ENCODE measurements at regions of chr5 and their contacts with region 1.

Region 1: GRCh38 chr5:80960531-80961375 is 590 bp downstream of the RASGRF2 start:
- DNase-seq: peak; percentile 40 to 74
- H3K4me3 ChIP-seq: peak overlapping the region; percentile 78
- H3K4me3 Mint-ChIP-seq: peak overlapping the region; percentile 78
- H3K27ac Mint-ChIP-seq: peak overlapping the region; percentile 25
- H3K4me1 ChIP-seq: peaks cover 39% of the 10 kb centered on the region
- H3K4me1 Mint-ChIP-seq: peaks cover 13% of the 10 kb centered on the region
- H3K27me3 ChIP-seq: no peaks in the 10 kb centered on the region
- H3K27me3 Mint-ChIP-seq: peaks cover 3% of the 10 kb centered on the region
- CTCF ChIP-seq: peak in 1 of 2 experiments; percentile 26

Region 2: DNA sequence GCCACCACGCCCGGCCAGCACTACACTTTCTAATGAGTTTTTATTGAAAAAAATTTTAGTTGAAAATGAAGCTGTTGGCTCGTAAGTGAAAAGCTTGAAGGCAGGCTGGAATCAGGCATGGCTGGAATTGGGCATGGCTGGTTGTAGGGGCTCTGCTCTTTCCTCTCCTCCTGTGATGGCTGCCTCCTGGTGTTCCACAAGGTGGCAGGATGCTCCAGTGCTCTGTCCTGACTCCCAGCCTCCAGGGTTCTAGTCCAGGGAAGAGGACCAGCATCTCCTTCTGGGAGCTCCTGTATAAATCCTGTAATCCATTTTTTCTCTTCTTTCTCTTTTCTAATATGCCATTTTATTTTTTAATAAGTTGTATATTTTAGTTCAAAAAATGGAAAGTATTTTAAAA is 248.8 kb before region 1 on chr5:
- CTCF ChIA-PET with region 1: no interaction called
- POLR2A ChIA-PET with region 1: no interaction called
- intact Hi-C with region 1: loop called (anchors 10 kb)
- DNase-seq: peak; percentile 59 to 62
- H3K4me3 ChIP-seq: no peak overlapping the region
- H3K4me3 Mint-ChIP-seq: no peak overlapping the region
- H3K27ac Mint-ChIP-seq: no peak overlapping the region
- H3K4me1 ChIP-seq: peaks cover 4% of the 10 kb centered on the region; the same call in 1 of the 2 replicates
- H3K4me1 Mint-ChIP-seq: no peaks in the 10 kb centered on the region
- H3K27me3 ChIP-seq: no peaks in the 10 kb centered on the region
- H3K27me3 Mint-ChIP-seq: no peaks in the 10 kb centered on the region
- CTCF ChIP-seq: peak; percentile 57 to 60

Region 3: DNA sequence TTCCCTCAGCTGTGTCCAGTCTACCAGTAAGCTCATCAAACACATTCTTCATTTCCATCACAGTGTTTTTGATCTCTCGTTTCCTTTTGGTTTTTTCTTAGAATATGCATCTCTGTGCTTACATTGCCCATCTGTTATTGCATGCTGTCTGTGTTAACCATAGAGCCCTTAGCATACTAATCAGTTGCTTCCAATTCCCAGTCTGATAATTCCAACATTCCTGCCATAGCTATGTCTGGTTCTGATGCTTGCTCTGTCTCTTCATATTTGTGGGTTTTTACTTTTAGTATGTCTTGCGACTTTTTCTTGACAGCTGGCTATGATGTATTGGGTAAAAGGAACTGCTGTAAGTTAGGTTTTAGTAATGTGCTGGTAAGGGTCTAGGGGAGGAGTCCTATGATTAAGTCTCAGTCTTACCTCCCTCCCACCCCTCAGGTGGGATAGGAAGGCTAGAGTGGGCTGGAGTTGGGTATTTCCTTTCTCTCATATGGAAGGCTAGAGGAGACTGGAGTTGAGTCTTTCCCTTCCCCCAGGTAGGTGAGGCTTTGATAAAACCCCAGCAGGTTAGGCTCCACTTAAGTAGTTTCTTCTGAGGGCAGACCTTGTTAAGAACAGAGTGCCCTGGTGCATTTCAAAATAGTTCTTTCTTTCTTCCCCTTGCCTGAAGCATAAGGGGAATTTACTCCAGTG is 99.7 kb before region 1 on chr5:
- CTCF ChIA-PET with region 1: no interaction called
- POLR2A ChIA-PET with region 1: no interaction called
- intact Hi-C with region 1: loop called (anchors 2 kb)
- DNase-seq: peak; percentile 47 to 60
- H3K4me3 ChIP-seq: no peak overlapping the region
- H3K4me3 Mint-ChIP-seq: peak overlapping the region; percentile 38
- H3K27ac Mint-ChIP-seq: peak overlapping the region; percentile 85
- H3K4me1 ChIP-seq: peaks cover 54% of the 10 kb centered on the region
- H3K4me1 Mint-ChIP-seq: peaks cover 39% of the 10 kb centered on the region
- H3K27me3 ChIP-seq: no peaks in the 10 kb centered on the region
- H3K27me3 Mint-ChIP-seq: no peaks in the 10 kb centered on the region
- CTCF ChIP-seq: no peak

Region 4: GRCh38 chr5:80975065-80975464 is 14.3 kb after region 1 on chr5:
- CTCF ChIA-PET with region 1: no interaction called
- POLR2A ChIA-PET with region 1: no interaction called
- intact Hi-C with region 1: no loop called
- DNase-seq: no peak
- H3K4me3 ChIP-seq: no peak overlapping the region
- H3K4me3 Mint-ChIP-seq: no peak overlapping the region
- H3K27ac Mint-ChIP-seq: no peak overlapping the region
- H3K4me1 ChIP-seq: no peaks in the 10 kb centered on the region; the same call in 1 of the 2 replicates
- H3K4me1 Mint-ChIP-seq: peaks cover 13% of the 10 kb centered on the region
- H3K27me3 ChIP-seq: no peaks in the 10 kb centered on the region
- H3K27me3 Mint-ChIP-seq: no peaks in the 10 kb centered on the region
- CTCF ChIP-seq: no peak

Region 5: GRCh38 chr5:81020478-81021174 is 59.9 kb after region 1 on chr5:
- CTCF ChIA-PET with region 1: no interaction called
- POLR2A ChIA-PET with region 1: no interaction called
- intact Hi-C with region 1: loop called (anchors 5 kb)
- DNase-seq: peak; percentile 35 to 44
- H3K4me3 ChIP-seq: no peak overlapping the region
- H3K4me3 Mint-ChIP-seq: no peak overlapping the region
- H3K27ac Mint-ChIP-seq: peak overlapping the region; percentile 8
- H3K4me1 ChIP-seq: peaks cover 20% of the 10 kb centered on the region
- H3K4me1 Mint-ChIP-seq: peaks cover 42% of the 10 kb centered on the region
- H3K27me3 ChIP-seq: no peaks in the 10 kb centered on the region
- H3K27me3 Mint-ChIP-seq: no peaks in the 10 kb centered on the region
- CTCF ChIP-seq: no peak

Region 6: GRCh38 chr5:81105261-81105877 is 144.6 kb after region 1 on chr5:
- CTCF ChIA-PET with region 1: interaction called, 3 read pairs
- POLR2A ChIA-PET with region 1: no interaction called
- intact Hi-C with region 1: loop called (anchors 1 kb)
- DNase-seq: no peak
- H3K4me3 ChIP-seq: no peak overlapping the region
- H3K4me3 Mint-ChIP-seq: no peak overlapping the region
- H3K27ac Mint-ChIP-seq: no peak overlapping the region
- H3K4me1 ChIP-seq: no peaks in the 10 kb centered on the region
- H3K4me1 Mint-ChIP-seq: no peaks in the 10 kb centered on the region
- H3K27me3 ChIP-seq: no peaks in the 10 kb centered on the region
- H3K27me3 Mint-ChIP-seq: no peaks in the 10 kb centered on the region
- CTCF ChIP-seq: no peak

Region 7: GRCh38 chr5:81194633-81195333 is 234.0 kb after region 1 on chr5:
- CTCF ChIA-PET with region 1: no interaction called
- POLR2A ChIA-PET with region 1: no interaction called
- intact Hi-C with region 1: loop called (anchors 10 kb)
- DNase-seq: peak; percentile 82 to 88
- H3K4me3 ChIP-seq: no peak overlapping the region
- H3K4me3 Mint-ChIP-seq: peak overlapping the region; percentile 59
- H3K27ac Mint-ChIP-seq: no peak overlapping the region
- H3K4me1 ChIP-seq: no peaks in the 10 kb centered on the region; the same call in 1 of the 2 replicates
- H3K4me1 Mint-ChIP-seq: peaks cover 10% of the 10 kb centered on the region
- H3K27me3 ChIP-seq: no peaks in the 10 kb centered on the region
- H3K27me3 Mint-ChIP-seq: no peaks in the 10 kb centered on the region
- CTCF ChIP-seq: peak; percentile 85 to 92

Region 8: DNA sequence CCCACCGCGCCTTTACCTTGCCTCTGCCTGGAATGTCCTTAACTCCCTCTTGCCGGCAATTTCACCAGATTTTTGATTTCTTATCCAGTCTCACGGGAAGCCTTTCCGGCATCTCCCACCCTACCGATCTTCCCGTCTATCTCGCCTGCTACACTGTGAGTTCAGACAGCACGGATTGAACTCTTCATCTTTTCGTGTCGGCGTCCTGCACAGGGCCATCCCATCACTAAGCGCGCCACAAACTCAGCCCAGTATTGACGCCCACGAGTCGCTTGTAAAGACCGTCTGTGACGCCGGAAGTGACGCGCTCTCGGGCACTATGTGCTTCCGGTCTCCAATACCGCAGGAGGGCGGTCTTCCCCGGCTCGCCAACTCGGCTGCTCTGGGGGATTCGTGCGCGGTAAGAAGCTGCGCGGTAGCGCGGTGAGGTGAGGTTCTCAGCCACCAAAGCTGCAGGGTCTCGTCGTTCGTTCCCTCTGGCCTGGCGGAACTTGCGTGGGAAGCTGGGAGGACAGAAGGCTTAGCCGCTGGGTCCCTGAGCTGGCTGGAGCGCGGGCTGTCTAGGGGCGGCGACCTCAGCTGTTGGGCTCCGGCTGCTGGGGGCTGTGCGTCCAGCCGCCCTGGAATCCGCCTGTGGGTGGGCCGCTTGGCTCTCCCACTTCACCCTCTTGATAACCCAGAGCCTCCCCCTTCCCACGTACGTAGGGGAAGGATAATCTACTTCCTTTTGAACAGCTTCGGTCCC is 340.7 kb after region 1 on chr5 and contains the start of gene ZCCHC9:
- CTCF ChIA-PET with region 1: no interaction called
- POLR2A ChIA-PET with region 1: no interaction called
- intact Hi-C with region 1: loop called (anchors 2 kb)
- DNase-seq: peak; percentile 92 to 94
- H3K4me3 ChIP-seq: peak within 1 kb of the TSS; percentile 86
- H3K4me3 Mint-ChIP-seq: peak within 1 kb of the TSS; percentile 91
- H3K27ac Mint-ChIP-seq: peak within 1 kb of the TSS; percentile 93
- H3K4me1 ChIP-seq: peaks cover 18% of the 10 kb centered on the region
- H3K4me1 Mint-ChIP-seq: peaks cover 14% of the 10 kb centered on the region
- H3K27me3 ChIP-seq: no peaks in the 10 kb centered on the region
- H3K27me3 Mint-ChIP-seq: no peaks in the 10 kb centered on the region
- CTCF ChIP-seq: peak in 1 of 2 experiments; percentile 46
- total RNA-seq, gene ZCCHC9: 72.2 and 82.2 TPM in 2 replicates